Dendritic cell treated with granulocyte-macrophage colony-stimulating factor and Interleukin-4, amounts not matched to agents 40 ng/mL and 50 ng/mL, for 4 days (primary cell): ENCODE measurements at regions of chrX and their contacts with region 1.

Region 1: GRCh38 chrX:68693481-68694434 is 46.3 kb downstream of the STARD8 start:
- H3K4me3 Mint-ChIP-seq: peak overlapping the region; percentile 79
- H3K27ac Mint-ChIP-seq: peak overlapping the region; percentile 96
- H3K4me1 Mint-ChIP-seq: peaks cover 35% of the 10 kb centered on the region
- H3K27me3 Mint-ChIP-seq: no peaks in the 10 kb centered on the region

Region 2: DNA sequence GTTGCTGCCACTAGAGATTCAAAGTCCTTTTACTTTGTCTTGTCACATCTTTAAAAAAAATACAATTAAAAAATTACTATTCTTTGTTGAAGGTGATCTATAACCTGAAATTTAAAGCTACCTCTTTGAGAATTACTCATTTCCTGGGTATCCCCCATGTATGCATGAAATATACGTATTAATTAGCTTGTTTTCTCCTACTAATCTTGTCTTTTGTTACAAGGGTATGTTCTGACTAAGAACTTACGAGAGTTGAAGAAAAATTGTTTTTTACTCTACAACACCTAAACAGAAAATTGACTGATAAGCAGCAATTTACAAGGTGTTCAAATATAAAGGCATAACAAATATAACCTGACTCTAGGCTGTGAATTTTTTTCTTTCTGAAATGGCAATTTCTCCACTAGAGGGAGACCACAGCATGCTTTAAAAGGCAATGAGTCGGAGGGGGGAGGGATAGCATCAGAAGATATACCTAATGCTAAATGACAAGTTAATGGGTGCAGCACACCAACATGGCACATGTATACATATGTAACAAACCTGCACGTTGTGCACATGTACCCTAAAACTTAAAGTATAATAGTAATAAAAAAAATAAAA is 510.0 kb before region 1 on chrX:
- intact Hi-C with region 1: loop called (anchors 10 kb)
- H3K4me3 Mint-ChIP-seq: no peak overlapping the region
- H3K27ac Mint-ChIP-seq: no peak overlapping the region
- H3K4me1 Mint-ChIP-seq: peaks cover 24% of the 10 kb centered on the region
- H3K27me3 Mint-ChIP-seq: no peaks in the 10 kb centered on the region

Region 3: DNA sequence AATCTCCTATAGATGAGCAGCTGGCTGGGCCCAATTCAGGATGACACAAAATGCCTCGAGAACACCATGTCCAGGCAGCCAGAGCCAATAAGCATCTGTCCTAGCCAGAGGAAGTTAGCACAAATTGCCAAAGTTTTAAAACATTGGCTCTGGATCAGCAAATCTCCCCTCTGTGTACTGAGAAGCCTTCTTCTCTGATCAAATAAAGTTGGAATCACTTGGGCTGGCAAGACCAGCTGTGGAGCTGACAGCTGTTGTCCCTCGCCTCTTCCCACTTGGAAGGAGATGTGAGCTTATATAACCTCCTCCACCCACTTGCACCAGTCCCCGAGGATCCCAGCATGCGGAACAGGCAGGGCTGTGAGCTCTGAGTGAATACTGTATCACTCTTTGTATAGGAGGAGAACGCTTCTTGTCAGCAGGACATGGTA is 444.3 kb before region 1 on chrX:
- intact Hi-C with region 1: no loop called
- H3K4me3 Mint-ChIP-seq: no peak overlapping the region
- H3K27ac Mint-ChIP-seq: no peak overlapping the region
- H3K4me1 Mint-ChIP-seq: no peaks in the 10 kb centered on the region
- H3K27me3 Mint-ChIP-seq: no peaks in the 10 kb centered on the region

Region 4: GRCh38 chrX:68995780-68996551 is 302.2 kb after region 1 on chrX:
- intact Hi-C with region 1: no loop called
- H3K4me3 Mint-ChIP-seq: peak overlapping the region; percentile 49
- H3K27ac Mint-ChIP-seq: peak overlapping the region; percentile 85
- H3K4me1 Mint-ChIP-seq: peaks cover 49% of the 10 kb centered on the region
- H3K27me3 Mint-ChIP-seq: no peaks in the 10 kb centered on the region